Activated CD4-positive, alpha-beta memory T cell treated with anti-CD3 and anti-CD28 coated beads for 36 hours (primary cell): ENCODE measurements at regions of chr11 and their contacts with region 1.

Region 1: DNA sequence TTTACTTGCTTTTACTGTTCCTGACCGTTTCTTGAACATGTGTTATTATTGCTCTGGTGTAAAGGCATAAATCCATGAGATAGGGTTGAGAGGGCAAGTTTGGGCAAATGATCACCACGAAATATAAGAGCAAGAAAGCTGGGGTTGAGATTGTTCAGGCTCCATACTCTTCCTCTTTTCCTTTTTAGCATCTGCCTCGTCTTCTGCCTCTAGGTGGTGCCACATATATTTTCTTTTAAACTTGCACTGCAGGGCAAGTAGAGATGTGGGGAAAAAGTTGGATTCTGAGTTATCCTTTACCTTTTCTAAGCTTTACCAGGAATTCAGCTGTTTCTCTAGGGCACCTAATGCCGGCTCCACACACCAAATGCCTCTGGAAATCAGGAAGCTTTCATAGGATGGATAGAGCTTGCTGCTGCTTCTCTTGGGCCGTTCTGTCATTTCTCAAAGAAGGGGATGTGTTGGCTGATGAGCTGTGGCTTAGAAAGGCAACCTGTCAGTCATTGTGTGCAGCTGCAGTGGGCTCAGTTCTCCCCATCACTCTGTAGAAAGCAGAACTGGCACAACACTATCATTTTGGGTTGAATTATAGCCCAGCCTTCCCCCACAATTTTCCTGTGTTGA is 98.2 kb downstream of the LDLRAD3 start:
- DNase-seq: no peak
- H3K4me3 Mint-ChIP-seq: no peak overlapping the region
- H3K27ac Mint-ChIP-seq: no peak overlapping the region
- H3K4me1 Mint-ChIP-seq: no peaks in the 10 kb centered on the region
- H3K27me3 Mint-ChIP-seq: no peaks in the 10 kb centered on the region

Region 2: DNA sequence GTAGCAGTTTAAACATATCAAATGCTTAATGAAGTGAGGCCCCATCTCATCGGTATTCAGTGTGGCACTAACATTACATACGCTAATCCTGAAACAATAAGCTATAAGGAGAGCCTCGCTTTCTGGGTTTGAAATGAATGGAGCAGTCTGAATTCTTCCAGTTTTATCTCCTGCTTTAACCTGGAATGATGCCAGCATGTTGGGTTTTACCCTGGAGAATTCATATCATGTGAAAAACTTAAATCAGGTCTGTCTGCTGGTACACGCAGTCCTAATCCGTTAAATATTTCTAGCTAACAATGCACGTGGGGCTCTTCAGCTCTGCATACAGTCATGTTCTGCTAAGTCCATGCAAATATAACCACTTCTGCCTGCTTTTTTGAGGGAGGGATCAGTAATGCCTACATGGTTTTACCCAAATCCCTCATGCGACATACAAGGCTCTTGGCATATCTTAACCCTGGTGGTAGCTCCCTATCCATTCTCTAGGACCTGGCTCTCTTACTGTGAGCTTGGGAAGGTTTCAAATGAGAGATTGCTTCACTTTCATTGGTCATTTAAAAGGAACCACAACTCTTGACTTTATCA is 154.4 kb after region 1 on chr11:
- CTCF ChIA-PET with region 1: no interaction called
- POLR2A ChIA-PET with region 1: no interaction called
- intact Hi-C with region 1: no loop called
- DNase-seq: no peak
- H3K4me3 Mint-ChIP-seq: no peak overlapping the region
- H3K27ac Mint-ChIP-seq: no peak overlapping the region
- H3K4me1 Mint-ChIP-seq: no peaks in the 10 kb centered on the region
- H3K27me3 Mint-ChIP-seq: peaks cover 2% of the 10 kb centered on the region

Region 3: GRCh38 chr11:36258730-36259360 is 216.7 kb after region 1 on chr11:
- CTCF ChIA-PET with region 1: interaction called, 5 read pairs
- POLR2A ChIA-PET with region 1: no interaction called
- intact Hi-C with region 1: loop called (anchors 2 kb)
- DNase-seq: peak; percentile 42
- H3K4me3 Mint-ChIP-seq: no peak overlapping the region
- H3K27ac Mint-ChIP-seq: no peak overlapping the region
- H3K4me1 Mint-ChIP-seq: no peaks in the 10 kb centered on the region
- H3K27me3 Mint-ChIP-seq: peaks cover 30% of the 10 kb centered on the region